ENCODE measurements at regions of chr12 and their contacts with region 1.

Region 1: DNA sequence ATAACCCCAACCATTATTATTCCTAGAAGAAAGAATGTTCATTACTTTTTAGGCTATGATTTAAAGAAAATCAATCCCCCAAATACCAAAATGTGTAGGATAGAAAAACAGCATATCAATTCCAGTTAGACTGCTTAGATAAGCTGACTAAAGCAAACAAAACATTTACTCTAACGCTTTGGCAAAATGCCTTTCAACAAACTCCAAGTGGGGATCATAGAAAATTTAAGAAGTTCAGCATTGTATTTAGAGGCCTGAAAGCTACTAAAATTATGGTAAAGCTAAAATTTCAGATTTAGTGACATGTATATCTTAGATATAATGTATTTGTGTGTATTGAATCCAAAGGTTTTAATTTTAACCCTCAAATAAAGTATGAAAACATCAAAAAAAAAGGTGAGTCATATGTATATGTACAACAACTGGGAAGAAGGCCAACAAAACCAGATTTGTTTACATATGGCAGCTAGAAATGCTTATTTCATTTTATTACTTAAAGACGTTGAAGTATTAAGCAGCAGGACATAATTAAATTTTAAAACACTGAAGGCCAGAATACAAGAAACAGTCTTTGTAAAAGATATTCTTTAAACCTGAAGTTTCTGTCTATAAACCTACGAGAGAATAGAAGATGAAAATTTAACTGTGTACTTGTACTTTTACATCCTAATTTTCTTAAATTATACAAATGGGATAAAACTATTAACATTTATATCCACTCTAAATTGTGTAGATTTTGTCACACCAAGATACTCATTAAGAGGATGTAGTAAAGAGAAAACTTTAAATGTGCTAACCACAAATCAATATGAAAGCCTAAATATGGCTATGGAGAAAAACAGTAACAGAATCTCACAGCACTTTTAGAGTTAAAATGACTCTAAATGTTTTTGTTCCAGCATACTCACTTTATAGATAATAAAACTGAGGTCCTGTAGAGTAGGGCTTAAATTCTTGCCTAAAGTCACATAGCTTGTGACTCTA is 71.4 kb downstream of the SLC41A2 start:
- DNase-seq: peak; percentile 84
- ATAC-seq: peak; percentile 82
- H3K4me3 ChIP-seq: no peak overlapping the region; the same call in 1 of the 2 replicates
- H3K27ac ChIP-seq: peak overlapping the region; percentile 51
- H3K4me1 ChIP-seq: peaks cover 26% of the 10 kb centered on the region
- H3K27me3 ChIP-seq: no peaks in the 10 kb centered on the region
- CTCF ChIP-seq: no peak

Region 2: DNA sequence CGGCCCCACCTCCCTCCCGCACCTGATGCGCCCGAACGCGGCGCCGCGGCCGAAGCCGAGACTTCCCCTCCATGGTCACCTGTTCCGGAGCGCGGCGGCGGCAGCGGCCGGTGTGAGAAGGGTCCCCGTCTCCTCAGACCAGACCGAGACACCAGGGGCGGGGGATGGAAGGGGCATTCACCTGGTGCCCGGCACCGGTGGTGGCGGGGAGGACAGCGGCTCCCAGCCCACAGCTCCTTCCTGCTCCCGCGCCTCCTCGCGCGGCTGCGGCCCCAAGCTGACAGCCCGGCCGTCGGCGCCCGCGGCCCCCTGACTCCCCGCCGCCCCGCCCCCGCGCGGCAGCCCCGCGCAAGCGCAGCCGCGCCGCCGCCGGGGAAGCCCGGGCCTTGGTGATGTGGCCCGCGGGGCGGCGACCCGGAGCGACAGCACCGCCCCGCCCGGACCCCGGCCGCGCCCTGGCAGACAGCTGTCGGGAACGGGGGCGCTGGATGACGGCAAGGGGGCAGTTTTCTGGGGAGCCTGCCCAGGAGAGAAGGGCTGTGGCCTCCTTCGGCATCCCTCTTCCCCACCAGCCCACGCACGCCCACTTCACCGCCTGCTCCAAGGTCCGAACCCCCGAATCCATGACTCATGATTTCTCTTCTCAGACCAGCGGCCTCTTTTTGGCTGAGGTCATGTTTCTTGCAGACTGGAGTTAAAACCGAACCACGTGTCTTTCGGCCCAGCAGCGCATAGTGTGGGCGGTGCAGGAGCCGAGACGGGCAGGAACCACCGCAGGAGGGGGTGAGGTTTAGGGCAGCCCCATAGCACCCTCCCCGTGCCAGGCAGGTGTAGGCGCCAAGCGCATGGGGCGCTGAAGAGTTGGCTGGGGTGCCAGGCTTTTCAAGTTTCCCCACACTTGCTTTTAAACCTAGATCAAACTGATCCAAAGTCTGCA is 71.6 kb after region 1 on chr12 and contains the start of gene SLC41A2:
- CTCF ChIA-PET with region 1: no interaction called
- POLR2A ChIA-PET with region 1: interaction called, 4 read pairs
- intact Hi-C with region 1: loop called (anchors 2 kb)
- DNase-seq: peak; percentile 89
- ATAC-seq: peak; percentile 82
- H3K4me3 ChIP-seq: peak within 1 kb of the TSS; percentile 79
- H3K27ac ChIP-seq: peak within 1 kb of the TSS; percentile 80
- H3K4me1 ChIP-seq: peaks cover 31% of the 10 kb centered on the region
- H3K27me3 ChIP-seq: no peaks in the 10 kb centered on the region
- CTCF ChIP-seq: peak; percentile 51
- total RNA-seq, gene SLC41A2: 16.3 and 20.4 TPM in 2 replicates

Measured in PC-3 (cell line).